Heart left ventricle (tissue), 16 donors: ENCODE measurements at regions of chr21 and their contacts with region 1.

Region 1: GRCh38 chr21:16194095-16194787 is 464.5 kb downstream of the USP25 start:
- DNase-seq: peak; percentile 67 to 78 (median 71)
- ATAC-seq: peak; percentile 89 to 95 (median 93)
- H3K4me3 ChIP-seq: peak overlapping the region; percentile 6 to 63 (median 48)
- H3K27ac ChIP-seq: peak overlapping the region; percentile 19 to 80 (median 68)
- H3K4me1 ChIP-seq: peaks cover 0 to 23% (median 0%) of the 10 kb centered on the region in 12 donors
- H3K27me3 ChIP-seq: no peaks in the 10 kb centered on the region
- CTCF ChIP-seq: peak in 9 of 12 donors; percentile 15 to 59 (median 42)
- POLR2A ChIP-seq: no peak

Region 2: DNA sequence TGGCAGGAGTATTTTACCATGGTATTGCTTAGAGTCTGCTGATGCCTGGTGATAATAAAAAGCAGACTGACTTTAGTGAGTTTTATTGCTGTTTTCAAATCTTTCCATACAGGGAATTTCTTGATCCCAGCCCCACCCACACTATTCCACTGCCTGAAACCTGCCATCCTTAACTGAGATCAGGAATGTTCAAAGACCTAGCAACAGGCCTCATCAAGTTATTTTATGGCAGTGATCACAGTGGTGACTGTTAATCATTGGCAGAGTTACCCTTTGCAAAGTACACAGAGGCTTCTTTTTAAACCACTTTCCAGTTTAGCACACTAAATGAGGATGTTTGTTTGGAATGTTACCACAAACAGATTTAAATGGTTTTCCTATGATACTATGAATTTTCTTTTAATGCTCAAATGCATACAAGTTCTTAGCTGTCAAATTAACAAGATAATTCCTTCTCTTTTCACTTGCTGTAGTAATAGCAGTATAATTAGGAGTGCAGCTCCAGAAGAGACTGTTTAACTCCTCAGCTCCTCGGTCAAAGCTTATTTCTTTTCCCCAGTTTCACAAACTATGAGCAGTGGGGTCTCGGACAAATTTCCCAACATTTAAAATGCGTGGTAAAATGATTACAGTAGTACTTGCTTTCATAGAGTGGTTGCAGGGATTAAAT is 534.4 kb before region 1 on chr21:
- intact Hi-C with region 1: no loop called
- DNase-seq: no peak
- ATAC-seq: no peak
- H3K4me3 ChIP-seq: no peak overlapping the region
- H3K27ac ChIP-seq: no peak overlapping the region
- H3K4me1 ChIP-seq: peaks cover 0 to 7% (median 0%) of the 10 kb centered on the region in 12 donors
- H3K27me3 ChIP-seq: no peaks in the 10 kb centered on the region
- CTCF ChIP-seq: no peak
- POLR2A ChIP-seq: no peak

Region 3: GRCh38 chr21:15986277-15986676 is 208.0 kb before region 1 on chr21:
- intact Hi-C with region 1: no loop called
- DNase-seq: no peak
- ATAC-seq: no peak
- H3K4me3 ChIP-seq: no peak overlapping the region
- H3K27ac ChIP-seq: no peak overlapping the region
- H3K4me1 ChIP-seq: no peaks in the 10 kb centered on the region
- H3K27me3 ChIP-seq: no peaks in the 10 kb centered on the region
- CTCF ChIP-seq: no peak
- POLR2A ChIP-seq: no peak

Region 4: DNA sequence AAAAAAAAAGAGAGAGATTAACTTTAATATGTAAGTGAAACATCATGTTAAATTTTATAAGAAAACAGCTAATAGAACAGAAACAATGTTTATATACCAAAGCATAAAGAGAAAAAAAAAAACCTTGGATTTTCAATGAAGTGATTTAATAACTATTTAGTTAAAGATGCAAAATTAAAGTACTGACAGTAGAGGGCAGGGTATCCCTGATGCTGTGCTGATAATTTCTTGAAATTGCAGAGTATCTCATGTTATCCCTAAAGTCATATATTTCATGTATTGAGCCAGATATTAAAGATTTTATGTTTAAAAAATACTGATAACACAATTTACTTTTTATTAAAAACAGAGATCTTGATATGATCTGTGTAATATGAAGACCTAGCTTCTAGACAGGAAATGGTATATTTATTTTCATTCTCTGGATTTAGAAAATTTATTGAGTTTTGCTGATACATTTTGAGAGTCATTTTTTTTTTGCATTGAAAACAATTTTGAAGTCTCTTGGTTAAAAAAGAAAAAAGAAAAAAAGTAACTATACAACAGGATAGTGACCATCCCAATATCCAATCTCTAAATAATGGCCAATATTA is 191.3 kb before region 1 on chr21:
- intact Hi-C with region 1: no loop called
- DNase-seq: no peak
- ATAC-seq: no peak
- H3K4me3 ChIP-seq: no peak overlapping the region
- H3K27ac ChIP-seq: no peak overlapping the region
- H3K4me1 ChIP-seq: peaks cover 0 to 4% (median 0%) of the 10 kb centered on the region in 12 donors
- H3K27me3 ChIP-seq: no peaks in the 10 kb centered on the region
- CTCF ChIP-seq: peak in 9 of 12 donors; percentile 15 to 54 (median 33)
- POLR2A ChIP-seq: no peak

Region 5: GRCh38 chr21:16308269-16308668 is 114.0 kb after region 1 on chr21:
- intact Hi-C with region 1: loop called in 6 of 10 experiments (anchors 10 kb)
- DNase-seq: no peak
- ATAC-seq: peak in 1 of 4 donors; percentile 44
- H3K4me3 ChIP-seq: peak overlapping the region in 10 of 12 donors; percentile 12 to 53 (median 34)
- H3K27ac ChIP-seq: peak overlapping the region; percentile 1 to 74 (median 62)
- H3K4me1 ChIP-seq: peaks cover 0 to 9% (median 0%) of the 10 kb centered on the region in 12 donors
- H3K27me3 ChIP-seq: no peaks in the 10 kb centered on the region
- CTCF ChIP-seq: no peak
- POLR2A ChIP-seq: no peak

Region 6: DNA sequence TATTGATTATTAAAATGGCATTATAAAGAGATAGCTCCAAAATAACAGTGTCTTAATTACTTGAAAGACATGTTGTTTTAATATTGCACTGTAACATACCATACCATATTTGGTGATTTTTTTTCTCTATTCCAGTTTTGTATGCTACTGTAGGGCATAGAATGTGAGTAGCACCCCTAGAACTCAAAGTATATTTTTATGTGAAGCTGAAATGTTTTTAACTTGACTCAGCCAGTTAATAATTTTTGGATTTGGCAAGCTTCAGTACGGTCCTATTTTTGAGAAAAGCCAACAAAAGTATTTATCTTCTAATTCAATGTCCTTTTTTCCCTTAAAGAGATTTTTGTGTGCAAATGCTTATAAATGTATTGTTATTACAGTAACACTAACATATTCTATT is 129.4 kb after region 1 on chr21:
- intact Hi-C with region 1: loop called in 1 of 10 experiments (anchors 10 kb)
- DNase-seq: no peak
- ATAC-seq: no peak
- H3K4me3 ChIP-seq: no peak overlapping the region
- H3K27ac ChIP-seq: no peak overlapping the region
- H3K4me1 ChIP-seq: peaks cover 0 to 23% (median 0%) of the 10 kb centered on the region in 12 donors
- H3K27me3 ChIP-seq: no peaks in the 10 kb centered on the region
- CTCF ChIP-seq: no peak
- POLR2A ChIP-seq: no peak

Region 7: GRCh38 chr21:16330082-16330907 is 136.1 kb after region 1 on chr21:
- intact Hi-C with region 1: loop called in 3 of 10 experiments (anchors 1 to 10 kb)
- DNase-seq: peak in 1 of 5 donors; percentile 12
- ATAC-seq: peak; percentile 94 to 99 (median 96)
- H3K4me3 ChIP-seq: peak overlapping the region in 7 of 12 donors; percentile 1 to 31 (median 14)
- H3K27ac ChIP-seq: peak overlapping the region in 1 of 12 donors; percentile 7
- H3K4me1 ChIP-seq: peaks cover 0 to 4% (median 0%) of the 10 kb centered on the region in 12 donors
- H3K27me3 ChIP-seq: no peaks in the 10 kb centered on the region
- CTCF ChIP-seq: peak; percentile 57 to 86 (median 79)
- POLR2A ChIP-seq: no peak

Region 8: DNA sequence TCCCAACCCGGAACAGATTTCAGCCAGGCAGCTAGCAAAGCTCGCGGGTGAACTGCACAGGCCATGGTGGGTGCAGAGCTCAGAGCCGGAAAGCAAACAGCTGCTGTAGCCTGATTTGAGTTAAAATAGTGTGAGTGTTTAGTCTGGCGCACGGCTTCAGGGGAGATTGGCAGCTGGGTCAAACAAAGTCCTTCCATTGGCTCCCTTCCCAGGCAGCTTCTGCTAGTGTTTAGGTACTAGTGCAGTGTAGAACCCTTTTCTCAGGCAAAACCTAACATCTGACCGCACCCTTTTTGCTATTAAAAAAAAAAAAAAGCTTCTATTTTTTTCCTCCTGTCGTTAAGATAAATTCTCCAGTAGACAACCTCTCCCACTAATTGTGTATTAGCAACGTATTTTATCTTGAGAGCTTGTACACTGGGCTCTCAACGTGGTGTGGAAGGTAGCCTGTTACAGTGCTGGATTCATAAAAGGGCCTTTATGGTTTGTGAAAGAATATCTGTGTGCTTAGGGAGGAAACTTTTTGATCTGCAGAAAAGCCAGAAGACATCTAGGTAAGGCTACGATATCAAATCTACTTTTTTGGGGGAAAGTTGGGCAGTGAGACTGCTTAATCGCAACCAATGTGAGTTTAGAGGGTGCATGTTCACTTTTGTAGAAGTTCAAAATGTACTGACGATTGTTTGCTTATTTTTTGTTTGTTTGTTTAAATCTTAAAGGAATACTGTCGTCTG is 225.1 kb after region 1 on chr21:
- intact Hi-C with region 1: loop called in 5 of 10 experiments (anchors 2 to 10 kb)
- DNase-seq: peak; percentile 78 to 90 (median 85)
- ATAC-seq: peak; percentile 85 to 96 (median 93)
- H3K4me3 ChIP-seq: peak overlapping the region; percentile 11 to 67 (median 54)
- H3K27ac ChIP-seq: peak overlapping the region; percentile 73 to 89 (median 86)
- H3K4me1 ChIP-seq: peaks cover 0 to 18% (median 7%) of the 10 kb centered on the region in 12 donors
- H3K27me3 ChIP-seq: no peaks in the 10 kb centered on the region
- CTCF ChIP-seq: no peak
- POLR2A ChIP-seq: no peak